HEK293 (cell line): ENCODE measurements at regions of chr11 and their contacts with region 1.

Region 1: GRCh38 chr11:107741044-107741823 is 29.4 kb upstream of the SLN start:
- H3K4me3 ChIP-seq: no peak overlapping the region
- H3K27ac ChIP-seq: no peak overlapping the region
- H3K4me1 ChIP-seq: no peaks in the 10 kb centered on the region
- CTCF ChIP-seq: no peak

Region 2: GRCh38 chr11:107780775-107781174 is 39.5 kb after region 1 on chr11:
- CTCF ChIA-PET with region 1: interaction called, 10 read pairs
- POLR2A ChIA-PET with region 1: no interaction called
- H3K4me3 ChIP-seq: no peak overlapping the region
- H3K27ac ChIP-seq: no peak overlapping the region
- H3K4me1 ChIP-seq: 0 out of 2 replicates have a peak, but pooled peaks cover 2% of the 10 kb centered on the region
- CTCF ChIP-seq: no peak

Region 3: GRCh38 chr11:107799218-107799859 is 58.1 kb after region 1 on chr11:
- CTCF ChIA-PET with region 1: interaction called, 12 read pairs
- POLR2A ChIA-PET with region 1: no interaction called
- H3K4me3 ChIP-seq: no peak overlapping the region
- H3K27ac ChIP-seq: no peak overlapping the region
- H3K4me1 ChIP-seq: no peaks in the 10 kb centered on the region
- CTCF ChIP-seq: peak; percentile 31; the same call in 1 of the 2 replicates

Region 4: GRCh38 chr11:107821199-107821927 is 80.1 kb after region 1 on chr11:
- CTCF ChIA-PET with region 1: no interaction called
- POLR2A ChIA-PET with region 1: no interaction called
- H3K4me3 ChIP-seq: no peak overlapping the region
- H3K27ac ChIP-seq: no peak overlapping the region
- H3K4me1 ChIP-seq: no peaks in the 10 kb centered on the region
- CTCF ChIP-seq: no peak

Region 5: DNA sequence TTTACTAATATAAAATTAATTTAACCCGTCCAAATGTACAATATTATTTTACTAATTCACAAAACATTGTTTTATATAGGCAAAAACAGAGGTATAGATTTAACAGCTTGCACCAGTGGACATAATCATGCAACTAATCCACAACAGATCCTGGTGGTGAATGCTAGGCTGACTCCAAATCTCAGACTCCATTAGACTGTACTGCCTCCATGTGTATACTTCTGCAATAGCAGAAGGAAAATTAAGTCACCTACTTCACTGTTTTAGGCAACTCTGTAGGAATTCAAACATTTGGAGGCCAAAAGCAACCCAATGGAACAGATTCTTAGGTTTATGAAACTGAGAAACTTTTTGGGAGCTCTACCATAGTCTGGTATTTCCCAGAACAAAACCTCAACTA is 157.0 kb after region 1 on chr11:
- CTCF ChIA-PET with region 1: interaction called, 27 read pairs
- POLR2A ChIA-PET with region 1: no interaction called
- H3K4me3 ChIP-seq: no peak overlapping the region
- H3K27ac ChIP-seq: no peak overlapping the region
- H3K4me1 ChIP-seq: no peaks in the 10 kb centered on the region
- CTCF ChIP-seq: peak; percentile 30; the same call in 1 of the 2 replicates

Region 6: GRCh38 chr11:108037636-108038035 is 296.4 kb after region 1 on chr11:
- CTCF ChIA-PET with region 1: no interaction called
- POLR2A ChIA-PET with region 1: no interaction called
- H3K4me3 ChIP-seq: no peak overlapping the region
- H3K27ac ChIP-seq: no peak overlapping the region
- H3K4me1 ChIP-seq: no peaks in the 10 kb centered on the region
- CTCF ChIP-seq: no peak